ENCODE measurements at regions of chr2 and their contacts with region 1.

Region 1: DNA sequence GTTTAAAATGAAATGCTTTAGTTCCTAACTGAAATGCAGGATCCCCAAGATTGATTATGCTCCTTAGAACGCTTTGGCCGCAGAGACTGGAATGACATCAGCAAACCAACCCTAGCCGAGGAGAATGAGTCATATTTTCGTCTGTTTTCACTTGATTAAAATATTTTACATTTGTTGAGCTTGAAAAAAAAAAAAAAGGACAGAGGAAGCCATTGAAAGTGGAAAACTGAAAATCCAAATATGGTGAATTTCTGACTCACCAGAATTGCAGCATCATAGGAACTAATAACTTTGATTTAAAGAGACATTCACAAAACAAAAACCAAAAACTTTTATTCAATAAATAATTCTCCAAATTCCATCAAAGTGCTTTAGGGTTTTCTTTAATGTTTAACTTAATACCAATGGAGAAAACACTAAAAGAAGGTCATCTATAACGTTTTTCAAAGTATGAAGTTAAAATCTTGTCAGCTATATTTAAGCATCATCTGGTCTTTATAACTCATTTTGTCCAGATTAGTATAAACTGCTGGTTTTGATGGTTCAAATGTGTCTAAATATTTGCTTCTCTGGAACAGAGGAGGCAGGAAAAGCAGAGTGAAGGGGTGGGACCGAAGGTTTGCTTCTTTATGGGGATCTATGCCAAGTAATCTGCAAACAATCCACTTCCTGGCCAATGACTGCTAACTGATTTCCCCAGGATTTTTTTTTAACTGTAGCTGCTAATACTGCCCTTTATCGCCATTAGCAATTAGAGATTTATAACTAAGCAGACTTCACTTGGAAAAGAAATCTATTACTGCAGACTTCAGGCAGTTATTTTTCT is 30.9 kb upstream of the COL5A2 start:
- DNase-seq: peak; percentile 90
- H3K4me3 ChIP-seq: peak overlapping the region in 2 of 3 experiments; percentile 26 to 46
- H3K27ac ChIP-seq: peak overlapping the region; percentile 96
- H3K4me1 ChIP-seq: peaks cover 16% of the 10 kb centered on the region
- H3K27me3 ChIP-seq: no peaks in the 10 kb centered on the region
- CTCF ChIP-seq: no peak

Region 2: DNA sequence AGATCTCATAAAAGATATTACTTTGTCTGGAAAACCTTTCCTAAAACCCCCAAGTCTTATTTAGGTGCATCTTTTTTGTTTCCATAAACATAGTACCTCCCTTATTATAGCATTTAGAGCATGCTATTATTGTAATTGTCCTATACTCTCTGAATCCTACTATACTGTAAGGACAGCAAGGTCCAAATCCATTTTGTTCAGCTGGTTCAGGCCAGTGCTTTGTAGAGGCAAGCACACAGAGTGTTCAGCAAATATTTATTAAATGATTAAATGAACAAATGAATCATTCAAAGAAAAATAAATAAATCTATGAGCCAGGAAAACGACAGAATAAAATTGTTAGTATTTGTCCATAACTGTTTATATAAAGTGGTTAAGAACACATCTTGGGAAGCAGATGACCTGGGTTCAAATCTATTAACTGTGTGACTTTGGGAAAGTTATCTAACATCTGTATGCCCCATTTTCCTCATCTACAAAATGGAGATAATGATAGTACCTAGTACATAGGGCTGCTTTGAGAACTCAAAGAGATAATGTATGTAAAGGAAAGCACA is 150.3 kb before region 1 on chr2:
- CTCF ChIA-PET with region 1: no interaction called
- dilution Hi-C with region 1: no loop called
- in situ Hi-C with region 1: no loop called
- intact Hi-C with region 1: no loop called
- DNase-seq: no peak
- H3K4me3 ChIP-seq: no peak overlapping the region
- H3K27ac ChIP-seq: no peak overlapping the region
- H3K4me1 ChIP-seq: no peaks in the 10 kb centered on the region
- H3K27me3 ChIP-seq: no peaks in the 10 kb centered on the region
- CTCF ChIP-seq: no peak

Region 3: GRCh38 chr2:189164746-189165145 is 45.7 kb before region 1 on chr2:
- CTCF ChIA-PET with region 1: no interaction called
- dilution Hi-C with region 1: loop called (anchors 5 kb)
- in situ Hi-C with region 1: no loop called
- intact Hi-C with region 1: no loop called
- DNase-seq: peak; percentile 48
- H3K4me3 ChIP-seq: no peak overlapping the region
- H3K27ac ChIP-seq: no peak overlapping the region
- H3K4me1 ChIP-seq: peaks cover 9% of the 10 kb centered on the region
- H3K27me3 ChIP-seq: no peaks in the 10 kb centered on the region
- CTCF ChIP-seq: no peak

Region 4: DNA sequence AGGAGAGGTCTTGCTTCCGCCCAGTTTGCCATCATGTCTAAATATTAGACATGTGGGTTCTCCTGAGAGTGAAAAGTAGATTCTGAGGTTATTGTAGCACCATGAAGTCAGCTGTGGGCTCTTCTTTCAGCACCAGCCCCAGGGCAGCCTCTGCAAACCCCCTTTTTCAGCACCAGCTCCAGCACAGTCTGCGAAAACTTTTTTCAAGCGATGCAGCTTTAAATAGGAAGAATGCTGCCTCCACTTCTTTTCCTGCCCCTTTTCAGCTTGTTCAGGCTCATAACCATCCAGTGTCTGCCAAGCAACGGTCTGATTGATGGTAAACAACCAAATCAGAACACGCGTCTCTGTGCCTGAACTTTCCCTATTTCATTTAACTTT is 30.9 kb before region 1 on chr2 and contains the start of gene COL5A2:
- CTCF ChIA-PET with region 1: interaction called, 4 read pairs
- dilution Hi-C with region 1: no loop called
- in situ Hi-C with region 1: no loop called
- intact Hi-C with region 1: loop called (anchors 2 kb)
- DNase-seq: peak; percentile 78
- H3K4me3 ChIP-seq: peak within 1 kb of the TSS; percentile 48 to 58 (median 54)
- H3K27ac ChIP-seq: peak within 1 kb of the TSS; percentile 52
- H3K4me1 ChIP-seq: no peaks in the 10 kb centered on the region
- H3K27me3 ChIP-seq: no peaks in the 10 kb centered on the region
- CTCF ChIP-seq: no peak
- total RNA-seq, gene COL5A2: 9.6 to 51.7 TPM

Region 5: DNA sequence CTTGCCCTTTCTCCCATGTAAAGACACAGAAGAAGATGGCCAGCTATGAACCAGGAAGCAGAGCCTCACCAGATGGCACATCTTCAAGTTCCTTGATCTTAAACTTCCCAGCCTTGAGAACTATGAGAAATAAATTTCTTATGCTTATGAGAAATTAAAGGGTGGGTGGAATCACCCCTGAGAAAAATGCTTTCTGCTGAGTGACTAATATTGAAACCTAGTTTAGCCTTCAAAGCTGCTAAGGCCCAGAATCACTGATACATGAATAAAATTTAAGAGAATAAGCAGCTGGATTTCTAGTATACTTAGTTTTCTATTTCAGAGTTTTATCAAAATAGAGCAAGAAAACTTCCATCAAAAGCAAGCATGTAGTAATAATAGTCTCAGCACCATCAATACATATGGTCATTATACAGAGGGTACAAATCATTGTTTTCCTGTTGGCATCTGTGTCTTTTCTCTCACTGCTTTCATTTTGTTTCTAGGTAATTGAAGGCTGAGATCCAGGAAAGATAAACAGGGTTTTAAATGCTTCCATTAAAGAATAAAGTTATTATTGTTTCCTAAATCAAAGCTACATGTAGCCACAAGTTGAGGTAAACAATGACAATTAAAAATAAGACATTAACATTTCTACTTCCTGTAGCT is 22.4 kb after region 1 on chr2:
- CTCF ChIA-PET with region 1: no interaction called
- dilution Hi-C with region 1: no loop called
- in situ Hi-C with region 1: no loop called
- intact Hi-C with region 1: loop called (anchors 1 kb)
- DNase-seq: peak; percentile 33
- H3K4me3 ChIP-seq: no peak overlapping the region
- H3K27ac ChIP-seq: peak overlapping the region; percentile 88
- H3K4me1 ChIP-seq: peaks cover 18% of the 10 kb centered on the region
- H3K27me3 ChIP-seq: no peaks in the 10 kb centered on the region
- CTCF ChIP-seq: no peak

Region 6: GRCh38 chr2:189318761-189319160 is 108.3 kb after region 1 on chr2:
- CTCF ChIA-PET with region 1: no interaction called
- dilution Hi-C with region 1: no loop called
- in situ Hi-C with region 1: no loop called
- intact Hi-C with region 1: no loop called
- DNase-seq: no peak
- H3K4me3 ChIP-seq: no peak overlapping the region
- H3K27ac ChIP-seq: no peak overlapping the region
- H3K4me1 ChIP-seq: no peaks in the 10 kb centered on the region
- H3K27me3 ChIP-seq: no peaks in the 10 kb centered on the region
- CTCF ChIP-seq: no peak

Region 7: DNA sequence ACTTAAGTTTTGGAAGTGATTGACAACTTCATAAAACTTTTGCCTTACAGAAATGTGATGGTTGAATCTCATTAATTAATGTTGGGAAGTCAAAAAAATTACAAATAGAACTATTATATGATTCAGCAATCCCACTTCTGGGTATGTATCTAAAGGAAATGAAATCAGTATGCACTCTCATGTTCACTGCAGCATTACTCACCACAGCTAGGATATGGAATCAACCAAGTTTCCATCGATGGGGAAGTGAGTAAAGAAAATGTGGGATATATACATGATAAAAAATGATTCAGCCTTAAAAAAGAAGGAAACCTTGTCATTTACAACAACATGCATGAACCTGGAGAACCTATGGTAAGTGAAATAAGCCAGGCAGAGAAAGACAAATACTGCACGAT is 118.4 kb after region 1 on chr2:
- CTCF ChIA-PET with region 1: no interaction called
- dilution Hi-C with region 1: no loop called
- in situ Hi-C with region 1: no loop called
- intact Hi-C with region 1: no loop called
- DNase-seq: no peak
- H3K4me3 ChIP-seq: no peak overlapping the region
- H3K27ac ChIP-seq: no peak overlapping the region
- H3K4me1 ChIP-seq: no peaks in the 10 kb centered on the region
- H3K27me3 ChIP-seq: no peaks in the 10 kb centered on the region
- CTCF ChIP-seq: no peak